Naive thymus-derived CD4-positive, alpha-beta T cell (primary cell): ENCODE measurements at regions of chr2 and their contacts with region 1.

Region 1: GRCh38 chr2:29923110-29923721 is 1.8 kb upstream of the ALK start:
- DNase-seq: peak in 4 of 9 donors; percentile 12 to 27 (median 20)
- ATAC-seq: no peak
- H3K4me3 ChIP-seq: no peak overlapping the region
- H3K4me3 Mint-ChIP-seq: peak overlapping the region in 1 of 10 donors; percentile 42
- H3K27ac ChIP-seq: no peak overlapping the region
- H3K27ac Mint-ChIP-seq: no peak overlapping the region
- H3K4me1 ChIP-seq: peaks cover 0 to 11% of the 10 kb centered on the region in 2 donors
- H3K4me1 Mint-ChIP-seq: peaks cover 0 to 28% (median 19%) of the 10 kb centered on the region in 7 donors
- H3K27me3 ChIP-seq: peaks cover 10 to 29% of the 10 kb centered on the region in 2 donors
- H3K27me3 Mint-ChIP-seq: peaks cover 46 to 59% (median 49%) of the 10 kb centered on the region in 5 donors

Region 2: GRCh38 chr2:30026087-30027055 is 103.2 kb after region 1 on chr2:
- CTCF ChIA-PET with region 1: no interaction called
- POLR2A ChIA-PET with region 1: no interaction called
- intact Hi-C with region 1: loop called in 1 of 2 experiments (anchors 1 kb)
- DNase-seq: no peak
- ATAC-seq: no peak
- H3K4me3 ChIP-seq: no peak overlapping the region
- H3K4me3 Mint-ChIP-seq: no peak overlapping the region
- H3K27ac ChIP-seq: no peak overlapping the region
- H3K27ac Mint-ChIP-seq: no peak overlapping the region
- H3K4me1 ChIP-seq: no peaks in the 10 kb centered on the region
- H3K4me1 Mint-ChIP-seq: no peaks in the 10 kb centered on the region
- H3K27me3 ChIP-seq: no peaks in the 10 kb centered on the region
- H3K27me3 Mint-ChIP-seq: peaks cover 3 to 25% (median 23%) of the 10 kb centered on the region in 5 donors

Region 3: GRCh38 chr2:30072250-30072842 is 149.1 kb after region 1 on chr2:
- CTCF ChIA-PET with region 1: interaction called, 3 read pairs
- POLR2A ChIA-PET with region 1: no interaction called
- intact Hi-C with region 1: loop called in 1 of 2 experiments (anchors 1 kb)
- DNase-seq: peak; percentile 5 to 47 (median 40)
- ATAC-seq: peak; percentile 76
- H3K4me3 ChIP-seq: no peak overlapping the region
- H3K4me3 Mint-ChIP-seq: no peak overlapping the region
- H3K27ac ChIP-seq: no peak overlapping the region
- H3K27ac Mint-ChIP-seq: no peak overlapping the region
- H3K4me1 ChIP-seq: no peaks in the 10 kb centered on the region
- H3K4me1 Mint-ChIP-seq: peaks cover 0 to 3% (median 0%) of the 10 kb centered on the region in 7 donors
- H3K27me3 ChIP-seq: no peaks in the 10 kb centered on the region
- H3K27me3 Mint-ChIP-seq: peaks cover 15 to 45% (median 33%) of the 10 kb centered on the region in 5 donors